Heart left ventricle (tissue), 16 donors: ENCODE measurements at regions of chr18 and their contacts with region 1.

Region 1: GRCh38 chr18:20996418-20996817 is 115.2 kb downstream of the ROCK1 start:
- DNase-seq: no peak
- ATAC-seq: no peak
- H3K4me3 ChIP-seq: no peak overlapping the region
- H3K27ac ChIP-seq: no peak overlapping the region
- H3K4me1 ChIP-seq: peaks cover 0 to 16% (median 0%) of the 10 kb centered on the region in 12 donors
- H3K27me3 ChIP-seq: no peaks in the 10 kb centered on the region
- CTCF ChIP-seq: no peak
- POLR2A ChIP-seq: no peak

Region 2: DNA sequence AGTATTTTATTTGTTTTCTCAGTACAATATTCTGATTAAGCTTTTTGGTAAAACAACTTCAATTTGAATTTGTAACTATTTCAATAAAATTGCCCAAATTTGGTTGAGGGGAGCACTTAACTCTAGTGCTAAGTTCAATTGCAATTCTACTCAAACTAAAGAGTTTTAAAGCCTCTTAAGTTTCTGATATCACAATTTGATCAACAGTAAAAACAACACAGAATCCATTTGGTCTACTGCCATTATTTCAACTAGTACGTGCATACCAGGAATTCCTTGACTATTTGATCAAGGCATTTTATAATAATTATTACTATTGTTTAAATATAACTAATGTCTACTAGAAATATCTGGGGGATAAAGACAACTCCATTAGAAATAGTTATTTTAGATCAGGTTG is 35.7 kb before region 1 on chr18:
- intact Hi-C with region 1: loop called in 1 of 10 experiments (anchors 5 kb)
- DNase-seq: no peak
- ATAC-seq: no peak
- H3K4me3 ChIP-seq: no peak overlapping the region
- H3K27ac ChIP-seq: no peak overlapping the region
- H3K4me1 ChIP-seq: no peaks in the 10 kb centered on the region
- H3K27me3 ChIP-seq: no peaks in the 10 kb centered on the region
- CTCF ChIP-seq: no peak
- POLR2A ChIP-seq: no peak

Region 3: DNA sequence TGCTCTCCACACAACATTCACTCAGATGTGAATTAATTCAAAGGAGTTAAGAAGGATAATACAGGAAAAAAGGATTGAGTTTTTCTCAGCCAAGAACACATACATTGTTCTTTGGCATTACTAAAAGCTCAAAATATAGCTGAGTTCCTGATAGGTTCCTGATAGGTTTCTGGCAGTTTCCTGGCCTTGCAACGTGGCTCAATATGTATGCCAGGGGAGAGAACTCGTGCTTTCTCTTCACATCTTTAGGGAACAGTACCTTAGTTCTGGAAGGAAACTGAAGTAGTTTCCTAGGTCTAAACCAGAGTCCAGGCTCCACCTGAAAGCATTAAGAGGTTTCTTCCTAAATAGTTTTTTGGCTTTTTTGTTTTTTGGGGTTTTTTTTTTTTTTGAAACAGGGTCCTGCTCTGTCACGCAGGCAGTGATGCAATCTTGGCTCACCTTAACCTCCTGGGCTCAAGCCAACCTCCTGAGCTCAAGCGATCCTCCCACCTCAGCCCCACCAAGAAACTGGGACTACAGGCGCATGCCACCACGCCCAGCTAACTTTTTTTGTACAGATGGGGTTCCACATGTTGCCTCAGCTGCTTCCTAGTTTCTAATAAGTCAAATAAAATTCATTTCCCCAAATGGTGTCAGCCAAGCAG is 561.3 kb after region 1 on chr18:
- intact Hi-C with region 1: no loop called
- DNase-seq: no peak
- ATAC-seq: peak in 1 of 4 donors; percentile 46
- H3K4me3 ChIP-seq: no peak overlapping the region
- H3K27ac ChIP-seq: peak overlapping the region in 1 of 12 donors; percentile 12
- H3K4me1 ChIP-seq: peaks cover 0 to 6% (median 1%) of the 10 kb centered on the region in 12 donors
- H3K27me3 ChIP-seq: no peaks in the 10 kb centered on the region
- CTCF ChIP-seq: no peak
- POLR2A ChIP-seq: no peak